OCI-LY7 (cell line): ENCODE measurements at regions of chr9 and their contacts with region 1.

Region 1: DNA sequence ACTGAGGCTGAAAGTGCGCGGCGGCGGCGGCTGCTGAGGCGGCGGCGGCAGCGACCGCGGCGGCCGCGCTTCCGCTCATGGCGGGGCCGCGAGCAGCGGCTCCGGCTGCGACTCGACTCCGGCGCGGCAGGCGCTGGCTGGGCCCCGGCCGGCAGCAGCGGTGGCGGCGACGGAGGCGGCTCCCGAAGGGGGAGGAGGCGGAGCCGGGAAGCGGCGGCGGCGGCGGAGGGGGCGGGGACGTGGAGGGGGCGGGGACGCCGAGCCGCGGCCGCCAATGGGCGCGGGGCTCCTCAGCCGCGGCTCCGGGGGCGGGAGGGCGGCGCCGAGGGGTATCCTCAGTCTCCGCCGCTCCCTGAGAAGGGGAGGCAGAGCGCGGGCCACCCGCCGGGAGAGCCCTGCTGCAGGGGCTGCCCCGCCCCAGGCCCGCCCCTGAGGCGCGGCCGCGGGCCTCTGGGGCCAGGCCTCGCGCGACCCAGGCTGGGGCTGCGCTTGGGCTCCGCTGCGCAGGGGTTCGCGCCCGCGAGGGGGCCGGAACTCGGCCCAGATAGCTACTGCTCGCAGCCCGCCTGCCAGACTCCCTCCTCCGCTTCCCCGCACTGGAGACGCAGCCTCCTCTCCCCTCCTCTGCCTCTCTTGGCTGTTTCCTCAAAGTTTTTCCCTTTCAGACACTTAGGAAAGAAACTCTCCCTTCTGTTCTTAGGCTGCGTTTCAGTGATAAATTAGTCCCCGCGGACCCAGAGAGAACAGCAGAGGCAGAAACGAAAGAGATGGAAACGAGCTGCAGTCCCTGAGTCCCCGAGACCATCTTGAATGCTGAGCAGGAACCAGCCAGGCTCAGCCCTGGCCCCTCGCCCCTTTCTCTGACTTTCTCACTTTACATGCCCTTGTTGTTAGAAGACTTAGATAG is 85.0 kb upstream of the MELK start:
- DNase-seq: peak; percentile 95
- H3K4me3 ChIP-seq: peak overlapping the region; percentile 83
- H3K27ac ChIP-seq: peak overlapping the region; percentile 80
- H3K4me1 ChIP-seq: peaks cover 27% of the 10 kb centered on the region
- CTCF ChIP-seq: no peak

Region 2: GRCh38 chr9:36461323-36461722 is 26.4 kb before region 1 on chr9:
- CTCF ChIA-PET with region 1: no interaction called
- POLR2A ChIA-PET with region 1: no interaction called
- intact Hi-C with region 1: no loop called
- DNase-seq: no peak
- H3K4me3 ChIP-seq: no peak overlapping the region
- H3K27ac ChIP-seq: no peak overlapping the region
- H3K4me1 ChIP-seq: no peaks in the 10 kb centered on the region
- CTCF ChIP-seq: no peak

Region 3: DNA sequence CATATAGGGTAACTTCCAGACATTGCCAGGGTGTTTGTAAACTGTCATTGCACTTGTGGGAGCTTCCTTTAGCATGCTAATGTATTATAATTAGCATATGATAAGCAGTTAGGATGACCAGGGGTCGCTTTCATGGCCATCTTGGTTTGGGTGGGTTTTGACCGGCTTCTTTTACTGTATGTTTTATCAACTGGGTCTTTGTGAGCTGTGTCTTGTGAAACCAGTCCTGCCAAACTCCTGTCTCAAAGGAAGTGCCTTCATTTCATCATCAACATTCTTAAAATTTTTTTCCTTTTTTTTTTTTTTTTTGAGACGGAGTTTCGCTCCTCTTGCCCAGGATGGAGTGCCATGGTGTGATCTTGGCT is 73.1 kb after region 1 on chr9:
- CTCF ChIA-PET with region 1: no interaction called
- POLR2A ChIA-PET with region 1: no interaction called
- intact Hi-C with region 1: loop called (anchors 5 kb)
- DNase-seq: no peak
- H3K4me3 ChIP-seq: no peak overlapping the region
- H3K27ac ChIP-seq: no peak overlapping the region
- H3K4me1 ChIP-seq: no peaks in the 10 kb centered on the region
- CTCF ChIP-seq: no peak